H1 (cell line): ENCODE measurements at regions of chr15 and their contacts with region 1.

Region 1: GRCh38 chr15:40217159-40217824 is 21.6 kb upstream of the PAK6 start:
- DNase-seq: no peak
- H3K4me3 ChIP-seq: no peak overlapping the region
- H3K27ac ChIP-seq: no peak overlapping the region
- H3K4me1 ChIP-seq: no peaks in the 10 kb centered on the region
- H3K27me3 ChIP-seq: no peaks in the 10 kb centered on the region
- CTCF ChIP-seq: peak; percentile 28 to 89 (median 78)
- EP300 ChIP-seq: no peak
- POLR2A ChIP-seq: no peak
- RAD21 ChIP-seq: peak; percentile 89 to 93

Region 2: DNA sequence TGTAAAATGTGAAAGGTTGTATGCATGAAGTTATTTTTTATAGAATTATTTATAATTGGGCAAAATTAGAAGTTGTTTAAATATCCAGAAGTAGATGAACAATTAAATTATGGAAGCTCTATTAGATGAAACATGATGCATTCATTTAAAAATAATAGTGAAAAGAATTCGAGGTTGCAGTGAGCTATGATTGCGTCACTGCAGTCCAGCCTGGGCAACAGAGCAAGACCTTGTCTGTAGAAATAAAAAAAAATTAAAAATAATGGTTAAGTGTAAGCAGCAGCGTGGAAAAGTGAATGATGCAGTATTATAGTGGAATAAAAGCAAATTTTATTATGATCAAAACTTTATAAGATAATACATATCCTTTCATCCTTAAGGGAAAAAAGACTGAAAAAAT is 42.1 kb before region 1 on chr15:
- CTCF ChIA-PET with region 1: interaction called, 10 read pairs
- POLR2A ChIA-PET with region 1: no interaction called
- DNase-seq: no peak
- H3K4me3 ChIP-seq: no peak overlapping the region
- H3K27ac ChIP-seq: no peak overlapping the region
- H3K4me1 ChIP-seq: no peaks in the 10 kb centered on the region
- H3K27me3 ChIP-seq: no peaks in the 10 kb centered on the region
- CTCF ChIP-seq: no peak
- EP300 ChIP-seq: no peak
- POLR2A ChIP-seq: no peak
- RAD21 ChIP-seq: no peak

Region 3: GRCh38 chr15:40232625-40233070 is 15.4 kb after region 1 on chr15:
- CTCF ChIA-PET with region 1: interaction called, 64 read pairs
- POLR2A ChIA-PET with region 1: interaction called, 8 read pairs
- DNase-seq: peak in 1 of 2 experiments; percentile 47
- H3K4me3 ChIP-seq: no peak overlapping the region
- H3K27ac ChIP-seq: no peak overlapping the region
- H3K4me1 ChIP-seq: no peaks in the 10 kb centered on the region; a peak in 1 of 7 replicates
- H3K27me3 ChIP-seq: no peaks in the 10 kb centered on the region
- CTCF ChIP-seq: no peak
- EP300 ChIP-seq: no peak
- POLR2A ChIP-seq: no peak
- RAD21 ChIP-seq: no peak

Region 4: GRCh38 chr15:40244663-40245601 is 27.6 kb after region 1 on chr15:
- CTCF ChIA-PET with region 1: interaction called, 25 read pairs
- POLR2A ChIA-PET with region 1: interaction called, 3 read pairs
- DNase-seq: no peak
- H3K4me3 ChIP-seq: no peak overlapping the region
- H3K27ac ChIP-seq: no peak overlapping the region
- H3K4me1 ChIP-seq: peaks cover 0 to 12% (median 9%) of the 10 kb centered on the region in 4 experiments; a peak in 4 of 7 replicates
- H3K27me3 ChIP-seq: 0 out of 7 replicates have a peak, but pooled peaks cover 0 to 2% (median 0%) of the 10 kb centered on the region in 4 experiments
- CTCF ChIP-seq: no peak
- EP300 ChIP-seq: no peak
- POLR2A ChIP-seq: no peak
- RAD21 ChIP-seq: no peak

Region 5: DNA sequence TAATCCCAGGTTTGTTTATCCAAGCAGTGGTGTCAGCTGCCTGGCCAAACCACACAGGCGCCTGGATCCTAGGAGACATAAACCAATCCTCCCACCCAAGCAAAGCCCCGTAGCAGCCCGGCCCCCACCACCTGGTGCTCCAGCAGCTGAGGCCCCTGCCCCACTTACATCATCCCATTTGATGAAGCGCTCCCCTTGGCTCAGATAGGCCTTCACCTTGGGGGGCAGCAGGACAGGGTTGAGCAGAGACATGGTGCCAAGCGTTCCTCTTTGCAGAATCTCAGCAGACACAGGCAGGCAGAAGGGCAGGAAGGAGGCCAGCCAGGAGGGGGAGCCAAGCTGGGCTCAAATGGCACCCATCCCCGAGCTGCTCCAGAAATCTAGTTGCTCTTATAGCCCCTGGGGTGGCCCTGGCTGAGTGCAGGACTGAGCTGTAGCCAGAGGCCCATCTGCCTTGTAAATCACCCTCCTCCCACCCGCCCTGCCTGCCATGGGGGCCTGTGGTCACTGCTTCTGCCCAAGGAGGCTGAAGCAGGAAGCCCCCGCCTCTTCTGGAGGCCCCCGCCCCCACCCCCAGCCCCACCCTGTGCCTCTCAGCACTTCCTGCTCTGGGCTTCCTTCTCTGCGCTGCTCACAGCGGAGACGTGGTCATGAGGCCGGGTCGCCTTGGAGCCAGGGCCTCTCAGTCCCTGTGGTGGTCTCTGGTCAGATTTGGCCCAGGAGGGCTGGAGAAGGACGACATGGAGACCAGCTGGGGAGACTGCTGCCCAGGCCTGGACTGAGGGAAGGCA is 90.3 kb after region 1 on chr15 and contains the start of gene PLCB2:
- CTCF ChIA-PET with region 1: interaction called, 37 read pairs
- POLR2A ChIA-PET with region 1: no interaction called
- DNase-seq: no peak
- H3K4me3 ChIP-seq: 0 out of 8 replicates have a peak within 1 kb of the TSS, but pooled peaks of 1 of the 4 experiments have one; percentile 19
- H3K27ac ChIP-seq: no peak within 1 kb of the TSS
- H3K4me1 ChIP-seq: peaks cover 0 to 29% (median 21%) of the 10 kb centered on the region in 4 experiments; a peak in 6 of 7 replicates
- H3K27me3 ChIP-seq: peaks cover 0 to 6% (median 0%) of the 10 kb centered on the region in 4 experiments; a peak in 3 of 7 replicates
- CTCF ChIP-seq: peak; percentile 30 to 60 (median 52); a peak in 3 of 4 replicates
- EP300 ChIP-seq: no peak
- POLR2A ChIP-seq: no peak
- RAD21 ChIP-seq: peak in 1 of 2 experiments; percentile 24; a peak in 1 of 4 replicates
- total RNA-seq, gene PLCB2: 8.4 and 9.4 TPM in 2 replicates

Region 6: GRCh38 chr15:40338041-40338657 is 120.9 kb after region 1 on chr15:
- CTCF ChIA-PET with region 1: interaction called, 37 read pairs
- POLR2A ChIA-PET with region 1: no interaction called
- DNase-seq: peak in 1 of 2 experiments; percentile 93
- H3K4me3 ChIP-seq: no peak overlapping the region
- H3K27ac ChIP-seq: no peak overlapping the region
- H3K4me1 ChIP-seq: peaks cover 0 to 44% (median 28%) of the 10 kb centered on the region in 4 experiments; a peak in 6 of 7 replicates
- H3K27me3 ChIP-seq: peaks cover 0 to 4% (median under 1%) of the 10 kb centered on the region in 4 experiments; a peak in 1 of 7 replicates
- CTCF ChIP-seq: peak in 2 of 3 experiments; percentile 90 to 97; a peak in 3 of 4 replicates
- EP300 ChIP-seq: no peak
- POLR2A ChIP-seq: no peak
- RAD21 ChIP-seq: peak; percentile 87 to 88